Activated B cell treated with CpG ODN at 0.5 μM for 24 hours (primary cell): ENCODE measurements at regions of chr4 and their contacts with region 1.

Region 1: DNA sequence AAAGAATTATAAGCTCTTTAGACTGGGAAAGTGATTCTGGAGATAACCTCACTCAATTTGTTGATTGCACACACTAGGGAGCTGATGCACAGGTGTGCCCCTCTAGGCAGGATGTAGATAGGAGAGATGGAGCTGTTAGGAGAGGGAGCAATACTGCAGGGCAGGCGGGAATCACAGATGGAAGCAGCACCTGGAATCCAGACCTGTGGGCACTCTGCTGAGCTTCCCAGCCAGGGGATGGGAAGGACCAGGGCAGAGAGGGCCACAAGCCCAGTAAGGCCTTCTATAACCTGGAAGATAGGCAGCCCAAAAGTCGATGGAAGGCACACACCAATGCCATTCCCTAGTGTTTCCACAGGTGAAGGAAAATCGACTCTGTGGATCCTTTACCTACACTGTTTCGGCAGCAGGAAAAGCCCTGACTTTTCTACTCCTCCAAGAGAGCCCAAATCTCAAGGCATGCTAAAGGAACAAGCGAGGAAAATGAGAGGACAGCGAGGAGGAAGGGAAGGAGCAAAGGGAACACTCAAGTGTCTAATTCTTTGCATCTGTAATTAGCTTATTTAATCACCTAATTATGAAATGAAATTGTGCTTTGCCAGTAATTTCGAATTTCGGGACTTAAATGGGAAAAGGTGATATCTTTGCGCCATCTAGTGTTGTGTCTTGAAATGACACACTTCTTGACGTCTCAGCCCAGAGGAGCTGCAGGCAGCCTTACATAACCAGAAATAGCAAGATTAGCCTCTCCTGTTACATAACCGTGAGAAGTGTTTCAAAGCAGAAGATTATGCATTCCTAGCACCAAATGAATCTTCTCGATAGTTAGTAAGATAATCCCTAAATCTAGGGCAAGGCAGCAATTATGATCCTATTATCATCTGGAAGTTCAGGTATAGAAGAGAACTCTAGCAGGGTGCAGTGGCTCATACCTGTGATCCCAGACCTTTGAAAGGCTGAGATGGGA is 31.0 kb upstream of the TLR3 start:
- DNase-seq: no peak
- ATAC-seq: peak; percentile 60
- H3K4me3 Mint-ChIP-seq: no peak overlapping the region
- H3K27ac Mint-ChIP-seq: no peak overlapping the region
- H3K4me1 Mint-ChIP-seq: no peaks in the 10 kb centered on the region
- H3K27me3 Mint-ChIP-seq: peaks cover 28% of the 10 kb centered on the region
- CTCF ChIP-seq: peak; percentile 41

Region 2: DNA sequence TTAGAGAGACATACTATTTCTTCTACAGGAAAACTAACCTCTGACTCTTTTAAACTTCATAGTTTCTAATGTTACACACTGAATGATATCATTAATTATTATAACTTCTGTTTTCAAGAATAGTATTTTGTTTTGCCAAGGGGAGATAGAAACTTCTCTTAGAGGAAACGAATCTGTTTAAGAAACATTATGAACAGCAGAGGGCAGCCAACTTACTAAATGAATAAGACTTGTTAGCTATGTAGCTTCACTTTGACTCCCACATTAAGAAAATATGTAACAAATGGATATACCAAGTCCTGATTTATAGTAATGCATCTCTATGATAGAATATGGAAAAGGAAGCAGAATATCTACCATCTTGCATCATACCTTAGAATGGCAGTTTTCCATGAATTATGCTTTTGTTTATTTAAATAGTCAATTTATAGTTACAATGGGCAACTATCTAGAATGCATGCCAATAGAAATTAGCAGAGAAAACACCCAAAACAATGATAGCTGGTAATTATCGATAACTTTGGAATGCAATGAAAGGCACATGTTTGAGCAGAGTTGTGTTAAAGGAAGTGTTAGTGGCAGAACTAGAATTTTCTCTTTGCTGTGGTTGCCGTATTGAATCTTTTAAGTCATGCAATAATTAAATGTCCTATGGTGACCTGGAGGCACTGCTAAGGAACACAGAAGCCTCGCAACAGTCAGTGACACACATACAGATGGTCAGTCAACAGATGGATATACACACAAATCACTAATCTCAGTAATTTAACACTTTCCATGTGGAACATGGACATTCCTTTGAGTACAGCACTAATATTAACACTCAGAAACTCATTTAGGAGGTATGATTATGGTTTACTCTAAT is 396.9 kb before region 1 on chr4:
- CTCF ChIA-PET with region 1: interaction called, 49 read pairs
- POLR2A ChIA-PET with region 1: no interaction called
- intact Hi-C with region 1: loop called (anchors 1 kb)
- DNase-seq: no peak
- ATAC-seq: no peak
- H3K4me3 Mint-ChIP-seq: no peak overlapping the region
- H3K27ac Mint-ChIP-seq: no peak overlapping the region
- H3K4me1 Mint-ChIP-seq: no peaks in the 10 kb centered on the region
- H3K27me3 Mint-ChIP-seq: peaks cover 31% of the 10 kb centered on the region
- CTCF ChIP-seq: no peak